HepG2 (cell line): ENCODE measurements at regions of chr18 and their contacts with region 1.

Region 1: GRCh38 chr18:62721839-62722795 is 6.8 kb downstream of the PHLPP1 start:
- DNase-seq: no peak
- ATAC-seq: no peak
- H3K4me3 ChIP-seq: peak overlapping the region in 1 of 3 experiments; percentile 86; a peak in 2 of 6 replicates
- H3K27ac ChIP-seq: peak overlapping the region; percentile 6
- H3K4me1 ChIP-seq: peaks cover 57% of the 10 kb centered on the region
- H3K27me3 ChIP-seq: no peaks in the 10 kb centered on the region; a peak in 1 of 5 replicates
- CTCF ChIP-seq: no peak
- EP300 ChIP-seq: no peak
- POLR2A ChIP-seq: no peak
- RAD21 ChIP-seq: no peak

Region 2: DNA sequence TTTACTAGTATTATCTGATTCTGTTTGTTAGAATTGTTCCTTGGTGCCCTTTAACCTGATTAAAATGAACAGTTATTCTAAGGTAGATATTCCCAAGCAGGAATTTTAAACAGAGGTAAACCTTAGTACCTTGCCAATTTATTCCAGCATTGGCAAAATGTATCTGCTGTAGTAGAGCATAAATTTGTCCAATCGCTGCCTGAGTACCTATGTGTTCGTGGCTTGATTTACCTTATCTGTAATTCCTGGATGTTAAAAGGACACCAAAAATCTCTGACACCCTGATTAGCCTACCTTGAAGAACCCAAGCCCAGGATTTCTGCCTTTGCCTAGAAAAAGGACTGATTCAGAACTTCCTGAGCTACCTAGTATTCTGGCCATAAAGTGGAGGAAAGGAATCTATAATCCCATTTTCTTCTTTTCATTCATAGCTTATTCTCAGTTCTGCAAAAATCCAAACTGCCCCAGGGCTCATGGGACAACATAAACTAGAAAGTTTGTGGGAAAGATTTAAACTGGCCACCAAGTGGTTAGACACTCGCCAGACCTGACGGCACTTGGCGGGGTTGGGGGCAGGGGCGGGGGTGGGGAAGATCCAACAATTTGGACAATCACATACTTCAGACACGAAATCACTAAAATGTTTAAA is 215.5 kb before region 1 on chr18:
- CTCF ChIA-PET with region 1: no interaction called
- POLR2A ChIA-PET with region 1: no interaction called
- in situ Hi-C with region 1: no loop called
- intact Hi-C with region 1: no loop called
- DNase-seq: no peak
- ATAC-seq: no peak
- H3K4me3 ChIP-seq: peak overlapping the region in 1 of 3 experiments; percentile 10; a peak in 1 of 6 replicates
- H3K27ac ChIP-seq: peak overlapping the region; percentile 49
- H3K4me1 ChIP-seq: peaks cover 67% of the 10 kb centered on the region
- H3K27me3 ChIP-seq: no peaks in the 10 kb centered on the region
- CTCF ChIP-seq: no peak
- EP300 ChIP-seq: no peak
- POLR2A ChIP-seq: no peak
- RAD21 ChIP-seq: no peak

Region 3: GRCh38 chr18:62759704-62760402 is 37.7 kb after region 1 on chr18:
- CTCF ChIA-PET with region 1: no interaction called
- POLR2A ChIA-PET with region 1: no interaction called
- in situ Hi-C with region 1: no loop called
- intact Hi-C with region 1: loop called (anchors 5 kb)
- DNase-seq: no peak
- ATAC-seq: no peak
- H3K4me3 ChIP-seq: no peak overlapping the region
- H3K27ac ChIP-seq: no peak overlapping the region
- H3K4me1 ChIP-seq: peaks cover 47% of the 10 kb centered on the region
- H3K27me3 ChIP-seq: no peaks in the 10 kb centered on the region
- CTCF ChIP-seq: no peak
- EP300 ChIP-seq: no peak
- POLR2A ChIP-seq: no peak
- RAD21 ChIP-seq: no peak